Astrocyte of the cerebellum (primary cell): ENCODE measurements at regions of chr16 and their contacts with region 1.

Region 1: GRCh38 chr16:50102051-50102746 is 36.4 kb downstream of the HEATR3 start:
- DNase-seq: peak; percentile 33
- H3K4me3 ChIP-seq: no peak overlapping the region
- CTCF ChIP-seq: no peak

Region 2: GRCh38 chr16:50038756-50039529 is 63.3 kb before region 1 on chr16:
- in situ Hi-C with region 1: loop called (anchors 10 kb)
- DNase-seq: no peak
- H3K4me3 ChIP-seq: no peak overlapping the region
- CTCF ChIP-seq: no peak

Region 3: DNA sequence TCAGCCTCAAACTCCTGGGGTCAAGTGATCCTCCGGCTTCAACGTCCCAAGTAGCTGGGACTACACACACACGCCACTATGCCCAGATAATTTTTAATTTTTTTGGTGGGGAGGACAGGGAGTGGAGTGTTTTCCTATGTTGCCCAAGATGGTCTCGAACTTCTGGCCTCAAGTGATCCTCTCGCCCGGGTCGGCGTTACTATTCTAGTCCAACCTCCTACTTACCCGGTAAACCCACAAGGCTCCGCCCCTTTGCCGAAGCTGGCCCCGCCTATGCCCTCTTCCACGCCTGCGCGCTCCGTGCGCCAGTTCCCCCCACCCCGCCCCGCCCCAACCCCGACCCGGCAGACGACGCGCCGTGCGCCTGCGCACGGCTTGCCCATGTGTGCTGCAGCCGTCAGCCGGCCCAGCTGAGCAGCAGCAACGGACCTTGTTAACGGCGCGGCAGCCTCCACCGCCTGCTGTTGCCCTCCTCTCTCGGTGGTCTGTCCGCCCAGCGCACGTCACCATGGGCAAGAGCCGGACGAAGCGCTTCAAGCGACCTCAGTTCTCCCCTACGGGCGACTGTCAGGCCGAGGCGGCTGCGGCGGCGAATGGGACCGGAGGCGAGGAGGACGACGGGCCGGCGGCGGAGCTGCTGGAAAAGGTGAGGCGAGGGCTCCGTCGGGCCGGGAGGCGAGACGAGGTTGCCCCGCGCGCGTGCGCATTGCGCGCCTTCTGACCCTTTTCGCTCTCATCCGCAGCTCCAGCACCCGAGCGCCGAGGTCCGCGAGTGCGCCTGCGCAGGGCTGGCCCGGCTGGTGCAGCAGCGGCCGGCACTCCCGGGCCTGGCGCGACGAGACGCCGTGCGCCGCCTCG is 36.3 kb before region 1 on chr16 and contains the start of gene HEATR3:
- in situ Hi-C with region 1: no loop called
- DNase-seq: peak; percentile 80
- H3K4me3 ChIP-seq: peak within 1 kb of the TSS; percentile 68
- CTCF ChIP-seq: no peak

Region 4: GRCh38 chr16:50152807-50153452 is 50.7 kb after region 1 on chr16 and contains the start of gene TENT4B:
- in situ Hi-C with region 1: no loop called
- DNase-seq: peak; percentile 48
- H3K4me3 ChIP-seq: peak within 1 kb of the TSS; percentile 63
- CTCF ChIP-seq: no peak

Region 5: DNA sequence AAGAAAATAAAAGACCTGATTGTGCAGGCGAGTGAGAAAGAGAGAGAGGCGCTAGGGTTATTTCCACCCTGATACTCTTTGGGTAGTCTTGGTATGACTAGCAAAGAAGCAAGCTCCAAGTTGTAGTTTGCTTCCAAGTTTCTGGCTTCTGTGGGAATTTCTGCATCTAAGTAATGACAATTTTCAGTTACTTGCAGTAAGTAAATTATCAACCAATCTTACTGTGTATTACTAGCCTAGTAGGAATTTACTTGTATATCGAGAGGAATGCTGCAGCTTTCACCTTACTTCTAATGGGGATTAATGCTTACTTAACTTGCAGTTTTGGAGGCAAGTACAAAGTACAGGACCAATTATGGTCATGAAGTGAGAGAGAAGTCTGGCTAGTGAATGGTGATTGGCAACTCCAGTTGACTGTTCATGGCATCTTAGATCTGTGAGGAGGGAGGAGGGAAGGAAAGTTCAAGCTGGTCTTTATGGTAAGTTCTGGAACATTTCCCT is 82.9 kb after region 1 on chr16:
- in situ Hi-C with region 1: loop called (anchors 10 kb)
- DNase-seq: no peak
- H3K4me3 ChIP-seq: no peak overlapping the region
- CTCF ChIP-seq: no peak